ENCODE measurements at regions of chr14 and their contacts with region 1.

Region 1: GRCh38 chr14:99415496-99416281 is 65.0 kb downstream of the SETD3 start:
- DNase-seq: peak; percentile 74
- ATAC-seq: peak; percentile 95
- H3K4me3 Mint-ChIP-seq: no peak overlapping the region
- H3K27ac Mint-ChIP-seq: peak overlapping the region; percentile 23
- H3K4me1 Mint-ChIP-seq: peaks cover 31% of the 10 kb centered on the region
- H3K27me3 Mint-ChIP-seq: no peaks in the 10 kb centered on the region

Region 2: DNA sequence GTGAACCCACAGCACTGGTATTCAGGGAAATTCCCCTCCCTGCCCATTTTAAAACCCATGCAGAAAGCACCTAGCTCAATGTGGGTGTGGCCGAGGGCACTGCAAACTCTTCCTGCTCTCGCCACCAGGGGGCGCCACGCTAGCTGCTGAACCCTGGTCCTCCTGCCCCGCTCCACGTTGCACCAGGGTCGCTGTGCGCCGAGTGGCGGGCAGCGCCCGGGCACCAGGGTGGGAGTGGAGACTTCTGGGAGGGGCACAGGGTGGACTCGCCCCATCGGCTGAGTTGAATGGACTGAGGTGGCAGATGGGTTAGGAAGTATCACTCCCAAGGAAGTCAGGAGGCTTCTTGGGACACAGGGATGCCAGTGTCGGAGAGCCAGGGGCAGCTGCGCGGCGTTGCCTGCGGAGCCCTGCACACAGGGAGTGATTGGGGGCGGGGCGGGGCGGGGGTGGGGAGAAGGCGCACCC is 95.5 kb before region 1 on chr14:
- CTCF ChIA-PET with region 1: interaction called, 29 read pairs
- POLR2A ChIA-PET with region 1: no interaction called
- intact Hi-C with region 1: loop called (anchors 1 kb)
- DNase-seq: peak; percentile 90
- ATAC-seq: peak; percentile 92
- H3K4me3 Mint-ChIP-seq: no peak overlapping the region
- H3K27ac Mint-ChIP-seq: no peak overlapping the region
- H3K4me1 Mint-ChIP-seq: peaks cover 6% of the 10 kb centered on the region
- H3K27me3 Mint-ChIP-seq: no peaks in the 10 kb centered on the region

Region 3: GRCh38 chr14:99393047-99393655 is 22.5 kb before region 1 on chr14:
- CTCF ChIA-PET with region 1: interaction called, 182 read pairs
- POLR2A ChIA-PET with region 1: no interaction called
- intact Hi-C with region 1: loop called (anchors 1 to 2 kb)
- DNase-seq: peak; percentile 69
- ATAC-seq: peak; percentile 54
- H3K4me3 Mint-ChIP-seq: no peak overlapping the region
- H3K27ac Mint-ChIP-seq: no peak overlapping the region
- H3K4me1 Mint-ChIP-seq: peaks cover 11% of the 10 kb centered on the region
- H3K27me3 Mint-ChIP-seq: no peaks in the 10 kb centered on the region

Region 4: GRCh38 chr14:99401621-99402284 is 13.9 kb before region 1 on chr14:
- CTCF ChIA-PET with region 1: interaction called, 182 read pairs
- POLR2A ChIA-PET with region 1: no interaction called
- intact Hi-C with region 1: no loop called
- DNase-seq: no peak
- ATAC-seq: peak; percentile 53
- H3K4me3 Mint-ChIP-seq: no peak overlapping the region
- H3K27ac Mint-ChIP-seq: peak overlapping the region; percentile 52
- H3K4me1 Mint-ChIP-seq: peaks cover 20% of the 10 kb centered on the region
- H3K27me3 Mint-ChIP-seq: no peaks in the 10 kb centered on the region

Region 5: DNA sequence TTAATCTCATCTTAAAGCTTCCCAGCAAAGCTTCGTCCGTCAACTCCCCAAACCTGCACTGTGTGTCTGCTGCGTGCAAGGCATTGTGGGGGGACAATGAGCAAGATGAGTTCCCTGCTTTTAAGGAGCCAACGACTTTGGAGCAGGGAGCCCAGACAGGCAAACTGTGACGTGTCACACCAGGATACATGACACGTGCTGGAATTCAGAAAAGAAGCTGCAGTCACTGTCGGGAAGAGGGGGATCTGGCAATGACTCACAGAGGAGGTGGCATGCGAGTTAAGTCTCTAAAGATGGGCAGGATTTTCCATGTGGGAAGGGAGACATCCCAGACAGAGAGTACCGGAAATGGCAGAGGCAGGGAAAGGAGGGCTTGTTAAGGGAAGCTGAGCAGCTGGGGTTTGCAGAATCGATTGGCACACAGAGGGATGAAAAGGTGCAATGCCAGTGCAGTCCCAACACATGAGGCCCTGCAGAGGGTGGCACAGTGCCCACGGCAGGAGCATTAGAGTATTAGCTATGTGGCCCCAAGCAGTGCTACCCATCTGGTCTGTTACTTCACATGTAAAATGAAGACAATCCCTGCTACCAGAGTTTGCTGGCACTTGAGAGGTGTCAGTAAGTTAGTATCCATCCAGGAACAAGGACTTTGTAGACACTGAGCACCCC is 12.1 kb after region 1 on chr14:
- CTCF ChIA-PET with region 1: interaction called, 24 read pairs
- POLR2A ChIA-PET with region 1: no interaction called
- intact Hi-C with region 1: no loop called
- DNase-seq: no peak
- ATAC-seq: no peak
- H3K4me3 Mint-ChIP-seq: no peak overlapping the region
- H3K27ac Mint-ChIP-seq: peak overlapping the region; percentile 26
- H3K4me1 Mint-ChIP-seq: peaks cover 13% of the 10 kb centered on the region
- H3K27me3 Mint-ChIP-seq: no peaks in the 10 kb centered on the region

Region 6: GRCh38 chr14:99687289-99688209 is 271.9 kb after region 1 on chr14:
- CTCF ChIA-PET with region 1: no interaction called
- POLR2A ChIA-PET with region 1: no interaction called
- intact Hi-C with region 1: no loop called
- DNase-seq: peak; percentile 53
- ATAC-seq: no peak
- H3K4me3 Mint-ChIP-seq: no peak overlapping the region
- H3K27ac Mint-ChIP-seq: no peak overlapping the region
- H3K4me1 Mint-ChIP-seq: peaks cover 10% of the 10 kb centered on the region
- H3K27me3 Mint-ChIP-seq: peaks cover 25% of the 10 kb centered on the region

Measured in activated CD4-positive, alpha-beta T cell treated with anti-CD3 and anti-CD28 coated beads for 36 hours (primary cell).